ENCODE measurements at regions of chr3 and their contacts with region 1.

Region 1: DNA sequence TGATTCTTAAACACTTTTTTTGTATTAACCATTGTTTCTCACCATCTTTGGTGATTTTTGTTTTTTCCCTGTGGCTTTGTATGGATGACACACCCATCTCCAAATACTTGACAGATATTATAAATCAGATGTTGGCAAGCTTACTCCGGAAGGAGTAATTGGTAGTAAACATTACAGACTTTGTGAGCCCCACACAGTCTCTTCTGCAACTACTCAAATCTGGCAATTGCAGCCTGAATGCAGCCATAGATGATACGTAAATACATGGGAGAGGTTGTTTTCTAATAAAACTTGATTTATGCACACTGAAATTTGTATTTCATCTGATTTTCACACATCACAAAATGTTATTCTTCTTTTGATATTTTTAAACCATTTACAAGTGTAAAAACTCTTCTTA is 331.5 kb downstream of the ARPP21 start:
- DNase-seq: no peak
- ATAC-seq: no peak

Region 2: GRCh38 chr3:35760146-35760545 is 210.6 kb before region 1 on chr3:
- intact Hi-C with region 1: no loop called
- DNase-seq: no peak
- ATAC-seq: no peak

Region 3: GRCh38 chr3:36700537-36701248 is 729.9 kb after region 1 on chr3:
- intact Hi-C with region 1: loop called (anchors 10 kb)
- DNase-seq: peak; percentile 67
- ATAC-seq: peak; percentile 86

Measured in sciatic nerve (tissue), 2 donors.